ENCODE measurements at regions of chr7 and their contacts with region 1.

Region 1: DNA sequence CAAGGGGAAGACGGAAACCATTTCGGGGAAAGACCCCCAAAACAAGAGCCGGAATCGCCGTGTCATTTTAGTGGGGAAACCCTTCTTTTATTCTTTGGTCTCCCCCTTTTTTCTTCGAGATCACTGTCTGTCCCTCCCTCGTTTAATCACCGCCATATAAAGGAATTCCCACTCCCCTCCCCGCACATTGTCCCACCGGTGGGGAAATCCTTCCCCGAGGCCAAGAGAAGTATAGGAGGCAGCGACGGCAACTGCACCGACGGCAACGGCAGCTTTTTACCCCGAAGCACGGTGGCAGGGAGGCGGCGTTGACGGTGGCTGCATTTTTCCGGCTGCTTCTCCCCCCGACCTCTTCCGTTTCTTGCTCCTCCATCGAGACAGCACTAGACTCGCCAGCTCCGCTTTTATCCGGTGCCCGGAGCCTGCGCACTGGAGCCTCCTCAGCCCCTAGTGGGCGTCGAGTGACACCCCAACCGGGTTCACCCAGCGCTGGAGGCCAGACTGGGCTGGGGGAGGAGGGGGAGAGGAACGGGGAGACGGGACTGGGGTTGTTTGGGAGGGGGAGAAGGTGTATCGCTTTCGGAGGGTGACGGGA is 687 bp upstream of the KMT2E start:
- DNase-seq: peak; percentile 95 to 97 (median 97)
- H3K4me3 ChIP-seq: peak overlapping the region; percentile 87 to 99
- H3K4me3 Mint-ChIP-seq: peak overlapping the region; percentile 94 to 100 (median 98)
- H3K27ac ChIP-seq: peak overlapping the region; percentile 100
- H3K27ac Mint-ChIP-seq: peak overlapping the region; percentile 99 to 100 (median 100)
- H3K4me1 ChIP-seq: peaks cover 56% of the 10 kb centered on the region
- H3K4me1 Mint-ChIP-seq: peaks cover 22 to 90% (median 38%) of the 10 kb centered on the region in 4 donors
- H3K27me3 ChIP-seq: no peaks in the 10 kb centered on the region
- H3K27me3 Mint-ChIP-seq: peaks cover 0 to 9% of the 10 kb centered on the region in 2 donors

Region 2: GRCh38 chr7:103344453-103345149 is 1668.7 kb before region 1 on chr7 and contains the start of gene DNAJC2:
- CTCF ChIA-PET with region 1: no interaction called
- POLR2A ChIA-PET with region 1: no interaction called
- intact Hi-C with region 1: loop called (anchors 2 kb)
- DNase-seq: peak; percentile 85 to 91 (median 87)
- H3K4me3 ChIP-seq: peak within 1 kb of the TSS; percentile 70
- H3K4me3 Mint-ChIP-seq: peak within 1 kb of the TSS; percentile 98 to 100 (median 99)
- H3K27ac ChIP-seq: peak within 1 kb of the TSS; percentile 82
- H3K27ac Mint-ChIP-seq: peak within 1 kb of the TSS; percentile 96 to 99 (median 98)
- H3K4me1 ChIP-seq: peaks cover 63% of the 10 kb centered on the region
- H3K4me1 Mint-ChIP-seq: peaks cover 37 to 83% (median 63%) of the 10 kb centered on the region in 4 donors
- H3K27me3 ChIP-seq: no peaks in the 10 kb centered on the region
- H3K27me3 Mint-ChIP-seq: no peaks in the 10 kb centered on the region
- total RNA-seq, gene DNAJC2: 36.0 to 40.5 TPM

Region 3: DNA sequence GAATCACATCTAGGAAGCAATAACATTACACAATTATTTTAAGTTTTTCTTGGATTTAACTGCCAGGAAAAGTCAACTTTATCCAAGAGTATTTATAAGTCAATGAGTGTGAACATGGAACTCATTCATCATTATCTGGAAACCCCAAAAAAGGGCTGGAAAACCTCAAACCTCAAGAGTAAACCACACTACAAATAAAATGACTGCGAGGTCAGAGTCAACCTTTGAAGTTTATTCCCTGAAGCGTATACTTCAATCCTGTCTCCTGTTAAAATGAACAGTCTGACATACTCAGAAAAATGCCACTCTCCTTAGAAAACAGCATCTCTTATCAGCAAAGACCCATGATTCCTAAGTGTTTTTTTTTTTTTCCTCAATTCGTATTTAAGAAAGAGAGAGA is 1110.4 kb before region 1 on chr7:
- CTCF ChIA-PET with region 1: no interaction called
- POLR2A ChIA-PET with region 1: no interaction called
- intact Hi-C with region 1: no loop called
- DNase-seq: no peak
- H3K4me3 ChIP-seq: no peak overlapping the region
- H3K4me3 Mint-ChIP-seq: no peak overlapping the region
- H3K27ac ChIP-seq: no peak overlapping the region
- H3K27ac Mint-ChIP-seq: no peak overlapping the region
- H3K4me1 ChIP-seq: no peaks in the 10 kb centered on the region
- H3K4me1 Mint-ChIP-seq: no peaks in the 10 kb centered on the region
- H3K27me3 ChIP-seq: no peaks in the 10 kb centered on the region
- H3K27me3 Mint-ChIP-seq: peaks cover 1 to 4% of the 10 kb centered on the region in 2 donors

Region 4: DNA sequence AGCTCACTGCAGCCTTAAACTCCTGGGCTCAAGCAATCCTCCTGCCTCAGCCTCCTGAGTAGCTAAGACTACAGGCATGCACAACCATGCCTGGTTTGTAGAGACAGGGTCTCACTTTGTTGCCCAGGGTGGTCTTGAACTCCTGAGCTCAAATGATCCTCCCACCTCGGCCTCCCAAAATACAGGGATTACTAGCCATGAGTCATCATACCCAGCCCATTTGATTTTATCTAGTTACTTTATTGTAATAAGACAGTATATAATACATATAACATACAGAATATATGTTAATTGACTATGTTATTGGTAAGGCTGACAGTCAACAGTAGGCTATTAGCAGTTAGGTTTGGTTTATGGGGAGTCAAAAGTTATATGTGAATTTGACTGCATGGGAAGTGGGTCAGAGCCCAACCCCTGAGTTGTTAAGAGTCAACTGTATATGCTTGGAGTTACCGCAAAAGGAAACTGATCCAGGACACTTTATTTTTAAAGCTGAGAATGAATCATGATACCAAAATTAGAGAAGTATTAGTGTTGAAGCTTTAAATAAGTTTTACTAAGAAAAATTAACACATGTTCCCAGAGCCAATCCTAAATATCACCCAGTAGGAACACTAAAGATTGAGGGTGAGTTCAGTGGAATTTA is 20.0 kb before region 1 on chr7:
- CTCF ChIA-PET with region 1: interaction called, 16 read pairs
- POLR2A ChIA-PET with region 1: interaction called, 760 read pairs
- intact Hi-C with region 1: no loop called
- DNase-seq: no peak
- H3K4me3 ChIP-seq: no peak overlapping the region
- H3K4me3 Mint-ChIP-seq: peak overlapping the region in 3 of 8 donors; percentile 7 to 41 (median 26)
- H3K27ac ChIP-seq: no peak overlapping the region
- H3K27ac Mint-ChIP-seq: peak overlapping the region in 6 of 7 donors; percentile 15 to 89 (median 54)
- H3K4me1 ChIP-seq: peaks cover 73% of the 10 kb centered on the region
- H3K4me1 Mint-ChIP-seq: peaks cover 41 to 63% (median 53%) of the 10 kb centered on the region in 4 donors
- H3K27me3 ChIP-seq: no peaks in the 10 kb centered on the region
- H3K27me3 Mint-ChIP-seq: no peaks in the 10 kb centered on the region

Region 5: GRCh38 chr7:105024743-105025142 is 11.4 kb after region 1 on chr7:
- CTCF ChIA-PET with region 1: interaction called, 7 read pairs
- POLR2A ChIA-PET with region 1: interaction called, 102 read pairs
- intact Hi-C with region 1: loop called (anchors 1 kb)
- DNase-seq: no peak
- H3K4me3 ChIP-seq: no peak overlapping the region
- H3K4me3 Mint-ChIP-seq: peak overlapping the region in 5 of 8 donors; percentile 36 to 77 (median 66)
- H3K27ac ChIP-seq: no peak overlapping the region
- H3K27ac Mint-ChIP-seq: peak overlapping the region in 2 of 7 donors; percentile 43 to 81
- H3K4me1 ChIP-seq: peaks cover 98% of the 10 kb centered on the region
- H3K4me1 Mint-ChIP-seq: peaks cover 65 to 97% (median 82%) of the 10 kb centered on the region in 4 donors
- H3K27me3 ChIP-seq: no peaks in the 10 kb centered on the region
- H3K27me3 Mint-ChIP-seq: no peaks in the 10 kb centered on the region

Region 6: DNA sequence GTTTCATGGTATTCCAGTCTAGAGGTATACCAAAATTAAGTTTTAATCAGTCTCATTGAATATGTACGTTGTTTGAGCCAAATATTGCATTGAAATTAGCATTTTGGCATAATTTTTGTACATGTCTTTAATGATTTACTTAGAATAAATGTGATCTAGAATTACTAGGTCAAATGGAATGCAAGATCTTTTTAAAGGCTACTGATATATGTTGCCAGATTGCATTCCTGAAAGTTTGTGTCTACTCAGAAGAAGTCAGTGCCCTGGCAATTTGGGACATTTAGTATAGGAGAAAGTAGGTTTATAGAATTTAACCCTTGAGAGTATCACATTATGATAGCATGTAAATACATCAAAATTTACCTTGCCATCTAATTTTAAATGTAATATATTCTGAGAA is 33.1 kb after region 1 on chr7:
- CTCF ChIA-PET with region 1: interaction called, 19 read pairs
- POLR2A ChIA-PET with region 1: interaction called, 95 read pairs
- intact Hi-C with region 1: loop called (anchors 2 kb)
- DNase-seq: no peak
- H3K4me3 ChIP-seq: no peak overlapping the region
- H3K4me3 Mint-ChIP-seq: no peak overlapping the region
- H3K27ac ChIP-seq: no peak overlapping the region
- H3K27ac Mint-ChIP-seq: peak overlapping the region in 3 of 7 donors; percentile 10 to 74 (median 70)
- H3K4me1 ChIP-seq: peaks cover 44% of the 10 kb centered on the region
- H3K4me1 Mint-ChIP-seq: peaks cover 42 to 64% (median 54%) of the 10 kb centered on the region in 4 donors
- H3K27me3 ChIP-seq: no peaks in the 10 kb centered on the region
- H3K27me3 Mint-ChIP-seq: no peaks in the 10 kb centered on the region

Region 7: DNA sequence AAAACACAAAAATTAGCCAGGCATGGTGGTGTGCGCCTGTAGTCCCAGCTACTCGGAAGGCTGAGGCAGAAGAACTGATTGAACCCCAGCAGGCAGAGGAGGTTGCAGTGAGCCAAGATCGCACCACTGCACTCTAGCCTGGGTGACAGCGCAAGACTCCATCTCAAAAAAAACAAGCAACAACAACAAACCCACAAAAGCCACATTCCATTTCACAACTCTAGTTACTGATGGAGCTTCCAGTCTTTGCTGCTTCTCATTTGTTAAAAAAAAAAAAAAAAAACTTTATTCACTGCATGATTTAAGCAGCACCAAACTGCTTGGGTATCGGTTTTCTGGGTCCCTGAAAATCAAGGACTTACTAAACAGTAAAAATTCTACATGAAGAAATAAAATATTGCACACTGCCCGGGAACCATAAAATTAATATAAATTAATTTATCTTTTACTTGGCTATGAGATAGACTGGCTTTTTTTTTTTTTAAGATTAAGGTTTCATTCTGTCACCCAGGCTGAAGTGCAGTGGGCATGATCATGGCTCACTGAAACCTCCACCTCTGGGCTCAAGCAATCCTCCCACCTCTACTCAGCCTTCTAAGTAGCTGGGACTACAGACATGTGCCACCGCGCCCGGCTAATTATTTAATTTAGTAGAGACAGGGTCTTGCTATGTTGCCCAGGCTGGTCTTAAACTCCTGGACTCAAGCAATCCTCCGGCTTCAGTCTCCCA is 333.4 kb after region 1 on chr7:
- CTCF ChIA-PET with region 1: interaction called, 5 read pairs
- POLR2A ChIA-PET with region 1: interaction called, 15 read pairs
- intact Hi-C with region 1: no loop called
- DNase-seq: peak in 4 of 5 donors; percentile 56 to 67 (median 60)
- H3K4me3 ChIP-seq: no peak overlapping the region
- H3K4me3 Mint-ChIP-seq: peak overlapping the region; percentile 34 to 78 (median 72)
- H3K27ac ChIP-seq: no peak overlapping the region
- H3K27ac Mint-ChIP-seq: peak overlapping the region; percentile 63 to 88 (median 79)
- H3K4me1 ChIP-seq: peaks cover 77% of the 10 kb centered on the region
- H3K4me1 Mint-ChIP-seq: peaks cover 40 to 70% (median 54%) of the 10 kb centered on the region in 4 donors
- H3K27me3 ChIP-seq: no peaks in the 10 kb centered on the region
- H3K27me3 Mint-ChIP-seq: no peaks in the 10 kb centered on the region

Region 8: DNA sequence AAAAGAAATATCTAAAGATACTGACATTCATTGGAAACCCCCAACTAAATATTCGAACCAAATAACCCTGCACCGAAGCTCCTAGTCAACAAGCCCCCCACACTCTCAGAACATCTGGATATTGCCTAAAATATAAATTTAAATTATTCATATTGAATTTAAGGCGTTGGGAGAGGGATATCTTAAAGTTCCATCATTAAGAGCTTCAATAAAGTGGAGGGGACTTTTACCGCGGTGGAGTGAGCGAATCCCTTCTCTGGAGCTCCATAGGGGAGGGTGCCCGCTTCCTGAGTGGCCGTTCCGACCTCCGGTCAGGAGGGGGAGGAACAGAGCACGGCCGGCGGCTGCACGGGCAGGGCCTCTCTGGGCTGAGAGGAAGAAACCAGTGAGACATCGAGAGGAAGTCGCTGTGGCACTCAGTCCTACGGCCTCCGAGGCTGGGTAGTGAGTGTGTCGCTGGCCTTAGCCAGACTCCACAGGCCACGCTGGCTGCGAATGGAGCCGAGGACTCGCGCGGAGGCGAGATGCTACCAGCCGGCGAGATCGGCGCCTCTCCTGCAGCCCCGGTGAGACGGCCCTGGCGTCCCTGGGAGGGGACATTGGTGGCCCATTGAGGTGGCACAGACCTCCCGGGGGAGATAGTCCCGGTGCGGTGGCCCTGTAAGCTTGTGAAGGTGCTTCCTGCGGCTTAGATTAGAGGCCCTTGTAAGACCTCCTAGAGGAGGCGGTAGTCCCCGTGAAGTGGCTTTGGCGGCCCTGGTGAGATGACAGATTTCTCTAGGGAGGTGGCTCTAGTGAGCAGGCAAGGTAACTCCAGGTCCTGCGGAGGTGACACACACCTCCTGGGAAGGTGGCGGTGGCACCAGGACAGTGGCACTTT is 518.7 kb after region 1 on chr7 and contains the start of gene RINT1:
- CTCF ChIA-PET with region 1: interaction called, 5 read pairs
- POLR2A ChIA-PET with region 1: interaction called, 26 read pairs
- intact Hi-C with region 1: no loop called
- DNase-seq: peak; percentile 86 to 88 (median 87)
- H3K4me3 ChIP-seq: peak within 1 kb of the TSS; percentile 93 to 94
- H3K4me3 Mint-ChIP-seq: peak within 1 kb of the TSS; percentile 85 to 98 (median 92)
- H3K27ac ChIP-seq: peak within 1 kb of the TSS; percentile 77
- H3K27ac Mint-ChIP-seq: peak within 1 kb of the TSS; percentile 73 to 98 (median 97)
- H3K4me1 ChIP-seq: peaks cover 23% of the 10 kb centered on the region
- H3K4me1 Mint-ChIP-seq: peaks cover 16 to 50% (median 30%) of the 10 kb centered on the region in 4 donors
- H3K27me3 ChIP-seq: no peaks in the 10 kb centered on the region
- H3K27me3 Mint-ChIP-seq: no peaks in the 10 kb centered on the region
- total RNA-seq, gene RINT1: 25.7 to 26.5 TPM